ENCODE measurements at regions of chr19 and their contacts with region 1.

Region 1: DNA sequence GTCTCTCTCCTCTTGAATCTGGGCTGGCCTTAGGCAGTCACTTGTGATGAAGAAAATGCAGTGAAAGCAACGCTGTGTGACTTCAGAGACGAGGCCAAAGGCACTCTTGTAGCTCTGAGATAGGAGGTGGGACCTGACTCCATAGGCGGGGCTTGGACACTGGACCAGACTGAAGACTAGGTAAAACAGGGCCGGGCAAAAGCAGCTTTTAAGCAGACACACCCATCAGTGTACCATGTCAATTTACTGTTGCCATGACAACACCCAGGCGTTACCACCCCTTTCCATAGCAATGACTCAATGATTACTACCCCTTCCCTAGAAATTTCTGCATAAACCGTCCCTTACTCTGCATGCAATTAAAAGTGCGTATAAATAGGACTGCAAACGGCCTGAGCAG is 6.6 kb upstream of the EID2 start:
- DNase-seq: no peak
- H3K4me3 ChIP-seq: no peak overlapping the region
- H3K4me3 Mint-ChIP-seq: no peak overlapping the region
- H3K27ac Mint-ChIP-seq: no peak overlapping the region
- H3K4me1 ChIP-seq: no peaks in the 10 kb centered on the region
- H3K4me1 Mint-ChIP-seq: no peaks in the 10 kb centered on the region
- H3K27me3 ChIP-seq: no peaks in the 10 kb centered on the region
- H3K27me3 Mint-ChIP-seq: peaks cover 14% of the 10 kb centered on the region
- CTCF ChIP-seq: no peak

Region 2: DNA sequence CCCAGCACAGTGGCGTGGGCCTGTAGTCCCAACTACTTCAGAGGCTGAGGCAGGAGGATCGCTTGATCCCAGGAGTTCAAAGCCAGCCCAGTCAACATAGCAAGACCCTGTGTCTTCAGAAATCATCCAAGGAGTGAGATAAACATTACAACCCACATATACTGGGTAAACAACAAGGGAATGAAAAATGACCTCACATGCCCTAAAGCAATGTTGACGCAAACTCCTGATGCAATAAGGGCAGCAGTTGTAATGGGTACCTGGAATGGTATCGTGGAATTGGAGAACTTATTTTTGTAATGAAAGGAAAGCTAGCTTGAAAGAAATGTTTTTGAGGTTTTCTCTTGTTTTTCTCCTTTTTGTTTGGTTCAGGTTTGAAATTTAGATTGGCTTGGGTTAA is 84.6 kb after region 1 on chr19:
- CTCF ChIA-PET with region 1: no interaction called
- POLR2A ChIA-PET with region 1: no interaction called
- intact Hi-C with region 1: loop called (anchors 1 kb)
- DNase-seq: peak; percentile 48 to 53
- H3K4me3 ChIP-seq: no peak overlapping the region
- H3K4me3 Mint-ChIP-seq: no peak overlapping the region
- H3K27ac Mint-ChIP-seq: no peak overlapping the region
- H3K4me1 ChIP-seq: peaks cover 11% of the 10 kb centered on the region; the same call in 1 of the 2 replicates
- H3K4me1 Mint-ChIP-seq: peaks cover 11% of the 10 kb centered on the region
- H3K27me3 ChIP-seq: no peaks in the 10 kb centered on the region
- H3K27me3 Mint-ChIP-seq: peaks cover 7% of the 10 kb centered on the region
- CTCF ChIP-seq: no peak

Region 3: DNA sequence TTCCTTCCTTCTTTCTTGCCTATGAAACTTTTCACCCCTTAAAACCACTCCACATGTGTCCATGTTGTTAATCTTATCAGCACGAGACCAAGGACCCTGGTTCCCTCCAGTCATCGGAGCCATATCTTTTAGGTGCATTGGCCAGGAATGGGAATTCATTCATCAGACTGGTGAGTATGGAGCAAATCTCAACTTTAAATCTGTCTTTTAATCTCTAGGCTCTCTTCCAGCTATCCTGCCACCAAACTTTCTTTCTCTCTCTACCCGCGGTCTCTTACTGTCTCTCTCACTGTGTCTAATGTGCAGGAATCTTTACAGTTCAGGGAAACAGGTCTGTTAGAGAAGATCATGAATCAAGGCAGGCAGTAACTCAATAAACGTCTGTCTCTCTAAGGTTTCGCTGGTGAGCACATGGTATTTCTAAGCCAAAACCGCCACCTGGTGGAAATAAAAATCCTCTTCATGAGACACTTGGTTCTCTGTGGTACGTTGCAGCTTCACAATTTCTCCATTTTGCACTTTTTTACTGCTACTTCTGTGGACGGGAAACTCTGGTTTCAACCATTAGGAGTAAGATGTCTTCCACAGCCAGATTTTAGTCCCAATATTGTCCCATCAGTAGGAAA is 125.3 kb after region 1 on chr19:
- CTCF ChIA-PET with region 1: interaction called, 9 read pairs
- POLR2A ChIA-PET with region 1: no interaction called
- intact Hi-C with region 1: loop called (anchors 1 kb)
- DNase-seq: peak; percentile 48 to 66
- H3K4me3 ChIP-seq: no peak overlapping the region
- H3K4me3 Mint-ChIP-seq: no peak overlapping the region
- H3K27ac Mint-ChIP-seq: no peak overlapping the region
- H3K4me1 ChIP-seq: no peaks in the 10 kb centered on the region
- H3K4me1 Mint-ChIP-seq: peaks cover 7% of the 10 kb centered on the region
- H3K27me3 ChIP-seq: no peaks in the 10 kb centered on the region; the same call in 1 of the 2 replicates
- H3K27me3 Mint-ChIP-seq: peaks cover 9% of the 10 kb centered on the region
- CTCF ChIP-seq: peak; percentile 54 to 69